ENCODE measurements at regions of chr15 and their contacts with region 1.

Region 1: DNA sequence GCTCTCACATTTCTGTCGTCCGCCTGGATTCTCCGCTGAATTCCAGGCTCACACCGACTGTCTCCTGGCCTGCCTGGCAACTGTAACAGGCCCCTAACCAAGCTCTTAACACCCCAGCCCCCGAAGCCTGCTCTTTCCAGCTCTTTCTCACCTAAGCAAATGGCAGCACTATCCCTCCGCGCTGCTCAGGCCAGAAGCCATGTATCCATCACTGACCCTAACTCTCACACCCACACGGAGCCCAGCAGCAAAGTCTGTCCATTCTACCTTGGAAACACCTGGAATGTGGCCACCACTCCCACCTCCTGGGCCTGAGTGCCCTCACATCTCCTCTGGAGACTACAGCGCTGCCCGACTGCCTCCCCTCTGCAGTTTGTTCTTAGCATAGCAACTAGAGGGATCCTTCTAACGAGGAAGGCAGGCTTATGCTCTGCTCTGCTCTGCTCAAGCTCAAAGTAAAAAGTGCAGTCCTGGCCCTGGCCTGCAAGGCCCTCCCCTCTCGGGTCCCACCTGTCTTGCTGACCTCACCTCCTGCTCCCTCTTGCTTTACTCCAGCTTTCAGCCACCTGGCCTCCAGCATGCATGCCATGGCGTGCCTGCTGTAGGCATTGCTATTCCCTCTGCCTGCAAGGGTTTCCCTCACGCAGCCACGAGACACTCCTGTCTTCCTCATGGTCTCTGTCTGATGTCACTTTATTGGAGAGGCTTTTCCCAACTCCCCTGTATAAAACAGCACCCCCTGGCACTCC is 27.2 kb downstream of the FEM1B start:
- DNase-seq: peak in 2 of 5 donors; percentile 1 to 10
- H3K4me3 ChIP-seq: no peak overlapping the region
- H3K27ac ChIP-seq: no peak overlapping the region
- H3K4me1 ChIP-seq: no peaks in the 10 kb centered on the region
- H3K27me3 ChIP-seq: no peaks in the 10 kb centered on the region
- CTCF ChIP-seq: no peak
- EP300 ChIP-seq: no peak
- POLR2A ChIP-seq: no peak

Region 2: GRCh38 chr15:68252925-68253534 is 51.7 kb before region 1 on chr15:
- intact Hi-C with region 1: loop called in 2 of 4 experiments (anchors 5 to 10 kb)
- DNase-seq: peak in 2 of 5 donors; percentile 31 to 57
- H3K4me3 ChIP-seq: no peak overlapping the region
- H3K27ac ChIP-seq: no peak overlapping the region
- H3K4me1 ChIP-seq: peaks cover 4% of the 10 kb centered on the region
- H3K27me3 ChIP-seq: no peaks in the 10 kb centered on the region
- CTCF ChIP-seq: peak; percentile 86 to 91 (median 87)
- EP300 ChIP-seq: no peak
- POLR2A ChIP-seq: no peak

Region 3: GRCh38 chr15:68372291-68372811 is 67.6 kb after region 1 on chr15:
- intact Hi-C with region 1: loop called in 1 of 4 experiments (anchors 5 kb)
- DNase-seq: peak in 3 of 5 donors; percentile 15 to 31 (median 16)
- H3K4me3 ChIP-seq: no peak overlapping the region
- H3K27ac ChIP-seq: no peak overlapping the region
- H3K4me1 ChIP-seq: peaks cover 5% of the 10 kb centered on the region
- H3K27me3 ChIP-seq: no peaks in the 10 kb centered on the region
- CTCF ChIP-seq: no peak
- EP300 ChIP-seq: no peak
- POLR2A ChIP-seq: no peak

Region 4: DNA sequence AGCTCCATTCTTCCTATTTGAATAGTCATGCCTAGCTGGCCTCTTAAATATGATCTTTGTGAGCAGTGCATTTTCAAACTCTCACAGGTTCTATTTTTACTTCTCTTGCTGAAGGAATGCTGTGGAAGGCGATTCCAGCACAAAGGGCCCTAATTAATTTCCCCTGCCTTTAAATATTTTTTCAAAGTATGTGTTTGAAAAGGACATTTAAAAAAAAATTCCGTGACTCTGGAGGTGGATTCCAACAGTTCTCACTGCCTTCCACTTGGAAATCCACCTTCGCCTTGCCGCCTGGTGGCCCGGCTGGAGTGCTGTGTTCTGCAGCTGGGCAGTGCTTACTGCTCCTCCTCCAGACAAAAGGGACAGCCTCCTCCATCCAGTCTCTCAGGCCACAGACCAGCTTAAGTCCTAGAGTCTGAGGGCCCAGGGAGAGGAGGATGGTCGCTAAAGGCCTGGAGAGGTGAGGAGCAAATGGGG is 212.6 kb after region 1 on chr15:
- intact Hi-C with region 1: no loop called
- DNase-seq: no peak
- H3K4me3 ChIP-seq: no peak overlapping the region
- H3K27ac ChIP-seq: peak overlapping the region; percentile 3 to 63
- H3K4me1 ChIP-seq: peaks cover 11% of the 10 kb centered on the region
- H3K27me3 ChIP-seq: no peaks in the 10 kb centered on the region
- CTCF ChIP-seq: peak in 2 of 3 donors; percentile 12 to 15
- EP300 ChIP-seq: no peak
- POLR2A ChIP-seq: no peak

Region 5: GRCh38 chr15:68550481-68551295 is 245.9 kb after region 1 on chr15:
- intact Hi-C with region 1: loop called in 2 of 4 experiments (anchors 5 to 10 kb)
- DNase-seq: peak; percentile 73 to 86 (median 84)
- H3K4me3 ChIP-seq: no peak overlapping the region
- H3K27ac ChIP-seq: no peak overlapping the region
- H3K4me1 ChIP-seq: no peaks in the 10 kb centered on the region
- H3K27me3 ChIP-seq: no peaks in the 10 kb centered on the region
- CTCF ChIP-seq: peak; percentile 84 to 88 (median 87)
- EP300 ChIP-seq: no peak
- POLR2A ChIP-seq: peak; percentile 7

Region 6: GRCh38 chr15:68559345-68560310 is 254.9 kb after region 1 on chr15:
- intact Hi-C with region 1: loop called in 2 of 4 experiments (anchors 5 to 10 kb)
- DNase-seq: peak; percentile 80 to 91 (median 85)
- H3K4me3 ChIP-seq: peak overlapping the region; percentile 43
- H3K27ac ChIP-seq: peak overlapping the region in 1 of 2 donors; percentile 36
- H3K4me1 ChIP-seq: peaks cover 7% of the 10 kb centered on the region
- H3K27me3 ChIP-seq: no peaks in the 10 kb centered on the region
- CTCF ChIP-seq: peak; percentile 93 to 97 (median 97)
- EP300 ChIP-seq: no peak
- POLR2A ChIP-seq: no peak

Region 7: DNA sequence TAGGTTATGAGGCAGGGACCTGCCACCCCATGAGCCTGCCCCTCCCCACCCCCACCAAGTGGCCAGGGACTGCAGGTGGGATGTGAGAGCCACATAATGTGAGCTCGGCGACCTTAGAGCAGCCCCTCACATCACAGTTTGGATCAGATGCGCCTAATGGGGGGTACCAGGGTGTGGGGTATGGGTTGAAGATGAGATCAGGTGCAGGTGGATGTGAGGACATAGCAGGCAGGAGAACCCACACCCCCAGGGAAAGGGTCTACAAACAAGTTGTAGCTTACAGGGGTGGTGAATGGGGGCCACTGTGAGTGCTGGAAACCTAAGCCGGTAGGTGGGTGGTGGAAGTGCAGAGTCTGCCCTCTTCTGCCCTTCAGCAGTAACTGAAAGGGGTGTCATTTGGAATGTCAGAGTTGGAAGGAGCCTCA is 368.0 kb after region 1 on chr15:
- intact Hi-C with region 1: loop called in 1 of 4 experiments (anchors 10 kb)
- DNase-seq: peak in 4 of 5 donors; percentile 27 to 41 (median 32)
- H3K4me3 ChIP-seq: no peak overlapping the region
- H3K27ac ChIP-seq: no peak overlapping the region
- H3K4me1 ChIP-seq: peaks cover 21% of the 10 kb centered on the region
- H3K27me3 ChIP-seq: no peaks in the 10 kb centered on the region
- CTCF ChIP-seq: peak in 2 of 3 donors; percentile 19 to 21
- EP300 ChIP-seq: no peak
- POLR2A ChIP-seq: no peak